A673 (cell line): ENCODE measurements at regions of chr6 and their contacts with region 1.

Region 1: GRCh38 chr6:44855562-44856411 is 468.3 kb downstream of the CDC5L start:
- DNase-seq: peak; percentile 93
- H3K4me3 ChIP-seq: peak overlapping the region; percentile 9
- H3K27ac ChIP-seq: peak overlapping the region; percentile 60
- H3K4me1 ChIP-seq: peaks cover 42% of the 10 kb centered on the region
- H3K27me3 ChIP-seq: no peaks in the 10 kb centered on the region
- CTCF ChIP-seq: no peak

Region 2: GRCh38 chr6:44127186-44128019 is 728.4 kb before region 1 on chr6 and contains the starts of genes MRPL14 and TMEM63B:
- CTCF ChIA-PET with region 1: no interaction called
- POLR2A ChIA-PET with region 1: interaction called, 11 read pairs
- intact Hi-C with region 1: no loop called
- DNase-seq: peak; percentile 91
- H3K4me3 ChIP-seq: peak within 1 kb of the TSS; percentile 83
- H3K27ac ChIP-seq: peak within 1 kb of the TSS; percentile 92
- H3K4me1 ChIP-seq: peaks cover 30% of the 10 kb centered on the region
- H3K27me3 ChIP-seq: no peaks in the 10 kb centered on the region
- CTCF ChIP-seq: no peak
- total RNA-seq, gene MRPL14: 78.8 and 80.4 TPM in 2 replicates
- total RNA-seq, gene TMEM63B: 32.0 and 34.2 TPM in 2 replicates

Region 3: GRCh38 chr6:44914141-44914540 is 58.4 kb after region 1 on chr6:
- CTCF ChIA-PET with region 1: no interaction called
- POLR2A ChIA-PET with region 1: no interaction called
- intact Hi-C with region 1: no loop called
- DNase-seq: no peak
- H3K4me3 ChIP-seq: no peak overlapping the region
- H3K27ac ChIP-seq: no peak overlapping the region
- H3K4me1 ChIP-seq: peaks cover 5% of the 10 kb centered on the region
- H3K27me3 ChIP-seq: no peaks in the 10 kb centered on the region
- CTCF ChIP-seq: no peak

Region 4: GRCh38 chr6:45310118-45310788 is 454.5 kb after region 1 on chr6:
- CTCF ChIA-PET with region 1: no interaction called
- POLR2A ChIA-PET with region 1: interaction called, 10 read pairs
- intact Hi-C with region 1: no loop called
- DNase-seq: no peak
- H3K4me3 ChIP-seq: no peak overlapping the region
- H3K27ac ChIP-seq: no peak overlapping the region
- H3K4me1 ChIP-seq: no peaks in the 10 kb centered on the region
- H3K27me3 ChIP-seq: no peaks in the 10 kb centered on the region
- CTCF ChIP-seq: no peak

Region 5: DNA sequence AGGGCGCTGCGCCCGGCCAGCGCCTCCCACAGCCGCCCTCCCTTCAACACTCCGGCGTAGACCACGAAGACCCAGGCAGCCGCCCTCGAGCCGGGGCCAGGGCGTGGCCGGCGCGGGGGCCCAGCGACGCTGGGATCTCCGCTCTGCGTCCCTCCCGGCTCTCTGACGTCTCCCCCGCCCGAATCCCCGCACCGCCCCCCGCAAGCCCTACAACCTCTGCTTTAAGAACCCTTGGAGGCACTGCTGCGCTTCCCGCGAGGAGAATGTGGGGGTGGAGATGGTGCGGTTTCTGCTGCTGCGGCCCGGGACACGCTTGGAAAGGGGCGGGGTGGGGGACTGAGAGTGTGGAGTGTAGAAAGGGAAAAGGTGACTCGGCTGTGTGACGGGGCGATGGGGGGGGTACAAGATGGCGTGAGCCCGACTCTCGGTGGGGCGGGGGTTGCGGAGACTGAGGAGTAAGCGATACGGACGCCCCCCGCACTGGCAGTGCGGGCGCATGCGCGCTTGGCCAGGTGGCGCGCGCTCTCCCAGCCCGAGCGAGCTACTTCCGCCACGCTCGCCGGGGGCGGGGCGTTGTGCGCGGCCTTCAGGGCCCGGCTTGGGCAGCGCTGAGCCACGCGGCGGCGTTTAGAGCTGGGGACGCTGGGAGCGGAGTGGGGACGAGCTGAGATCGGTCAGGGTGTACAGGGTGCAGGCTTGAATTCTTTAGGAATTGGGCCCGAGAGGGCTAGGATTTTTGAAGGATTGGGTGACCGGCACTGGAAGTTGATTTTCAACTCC is 522.0 kb after region 1 on chr6 and contains the start of gene SUPT3H:
- CTCF ChIA-PET with region 1: no interaction called
- POLR2A ChIA-PET with region 1: no interaction called
- intact Hi-C with region 1: loop called (anchors 5 kb)
- DNase-seq: peak; percentile 98
- H3K4me3 ChIP-seq: peak within 1 kb of the TSS; percentile 95
- H3K27ac ChIP-seq: peak within 1 kb of the TSS; percentile 99
- H3K4me1 ChIP-seq: peaks cover 4% of the 10 kb centered on the region
- H3K27me3 ChIP-seq: no peaks in the 10 kb centered on the region
- CTCF ChIP-seq: 0 out of 2 replicates have a peak, but pooled peaks have one; percentile 10
- total RNA-seq, gene SUPT3H: 10.8 and 14.2 TPM in 2 replicates

Region 6: GRCh38 chr6:45514454-45515230 is 658.9 kb after region 1 on chr6:
- CTCF ChIA-PET with region 1: no interaction called
- POLR2A ChIA-PET with region 1: no interaction called
- intact Hi-C with region 1: no loop called
- DNase-seq: no peak
- H3K4me3 ChIP-seq: no peak overlapping the region
- H3K27ac ChIP-seq: no peak overlapping the region
- H3K4me1 ChIP-seq: peaks cover 29% of the 10 kb centered on the region
- H3K27me3 ChIP-seq: no peaks in the 10 kb centered on the region
- CTCF ChIP-seq: no peak